ENCODE measurements at regions of chr12 and their contacts with region 1.

Region 1: DNA sequence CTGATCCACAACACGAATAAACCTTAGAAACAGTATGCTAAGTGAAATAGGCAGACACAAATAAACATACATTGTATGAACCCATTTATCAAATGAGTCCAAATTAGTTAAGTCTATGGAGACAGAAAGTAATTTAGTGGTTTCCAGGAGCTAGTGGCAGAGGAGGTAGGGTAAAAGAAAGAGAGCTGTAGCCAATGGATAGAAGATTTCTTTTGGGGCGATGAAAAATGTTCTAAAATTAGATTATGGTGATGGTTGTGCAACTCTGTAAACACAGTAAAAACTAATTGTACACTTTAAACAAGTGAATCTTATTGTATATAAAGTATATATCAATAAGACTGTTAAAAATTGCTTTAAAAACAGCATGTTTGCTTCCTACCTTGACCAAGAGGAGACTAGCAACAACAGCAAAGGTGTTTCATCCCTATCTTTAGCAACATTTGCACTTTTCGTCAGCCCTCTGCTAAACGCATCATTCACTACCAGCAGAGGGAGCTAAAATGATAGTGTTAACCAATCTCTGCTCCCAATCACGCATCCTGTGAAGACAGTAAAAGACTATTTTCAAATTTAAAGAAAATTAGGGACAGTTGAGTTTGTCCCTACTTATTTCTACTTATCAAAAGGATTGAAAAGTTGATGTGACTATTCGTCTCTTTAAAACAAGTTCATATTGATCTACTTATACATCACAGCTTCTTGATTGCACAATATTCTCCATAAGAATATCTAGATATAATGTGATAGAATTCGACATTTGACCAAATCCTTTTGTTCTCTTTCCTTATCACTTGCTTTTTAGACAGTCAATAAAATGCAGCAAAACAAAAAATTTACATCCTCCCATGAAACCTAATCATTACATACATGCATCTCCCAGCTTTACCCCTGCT is 24.0 kb upstream of the LGR5 start:
- DNase-seq: peak; percentile 56
- H3K4me3 Mint-ChIP-seq: no peak overlapping the region
- H3K27ac Mint-ChIP-seq: no peak overlapping the region
- H3K4me1 Mint-ChIP-seq: no peaks in the 10 kb centered on the region
- H3K27me3 Mint-ChIP-seq: peaks cover 10% of the 10 kb centered on the region
- CTCF ChIP-seq: peak; percentile 81

Region 2: DNA sequence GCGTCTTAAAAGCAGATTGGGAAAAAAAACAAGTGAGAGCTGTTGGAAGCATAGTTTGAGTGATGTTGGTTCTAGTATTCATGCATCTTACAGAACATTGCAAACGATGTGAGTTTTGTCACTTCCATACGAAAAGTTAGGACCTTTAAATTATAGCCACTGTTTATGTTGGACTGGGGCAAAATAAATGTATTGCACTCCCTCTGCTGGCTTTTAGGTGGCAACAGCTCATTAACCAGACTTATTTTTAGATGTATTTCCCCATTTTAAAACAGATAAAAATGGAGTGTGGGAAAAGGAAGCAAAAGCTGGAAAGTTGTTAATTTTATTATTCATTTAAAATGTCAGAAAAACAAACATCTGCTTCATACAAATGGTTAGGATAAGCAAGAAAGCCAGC is 135.9 kb after region 1 on chr12:
- CTCF ChIA-PET with region 1: interaction called, 12 read pairs
- intact Hi-C with region 1: loop called (anchors 1 kb)
- DNase-seq: no peak
- H3K4me3 Mint-ChIP-seq: no peak overlapping the region
- H3K27ac Mint-ChIP-seq: no peak overlapping the region
- H3K4me1 Mint-ChIP-seq: peaks cover 7% of the 10 kb centered on the region
- H3K27me3 Mint-ChIP-seq: no peaks in the 10 kb centered on the region
- CTCF ChIP-seq: no peak

Region 3: GRCh38 chr12:71636704-71637115 is 221.1 kb after region 1 on chr12:
- CTCF ChIA-PET with region 1: interaction called, 7 read pairs
- intact Hi-C with region 1: loop called (anchors 2 kb)
- DNase-seq: peak; percentile 38
- H3K4me3 Mint-ChIP-seq: no peak overlapping the region
- H3K27ac Mint-ChIP-seq: peak overlapping the region; percentile 55
- H3K4me1 Mint-ChIP-seq: no peaks in the 10 kb centered on the region
- H3K27me3 Mint-ChIP-seq: no peaks in the 10 kb centered on the region
- CTCF ChIP-seq: peak; percentile 82